ENCODE measurements at regions of chr17 and their contacts with region 1.

Region 1: GRCh38 chr17:36601303-36602029 is at the start of gene MRM1:
- DNase-seq: peak; percentile 89
- H3K4me3 ChIP-seq: peak within 1 kb of the TSS; percentile 73 to 90 (median 84)
- H3K27ac ChIP-seq: peak within 1 kb of the TSS; percentile 69
- H3K4me1 ChIP-seq: peaks cover 13% of the 10 kb centered on the region
- H3K27me3 ChIP-seq: no peaks in the 10 kb centered on the region
- CTCF ChIP-seq: peak in 1 of 2 donors; percentile 23
- total RNA-seq, gene MRM1: 4.3 to 10.1 TPM

Region 2: DNA sequence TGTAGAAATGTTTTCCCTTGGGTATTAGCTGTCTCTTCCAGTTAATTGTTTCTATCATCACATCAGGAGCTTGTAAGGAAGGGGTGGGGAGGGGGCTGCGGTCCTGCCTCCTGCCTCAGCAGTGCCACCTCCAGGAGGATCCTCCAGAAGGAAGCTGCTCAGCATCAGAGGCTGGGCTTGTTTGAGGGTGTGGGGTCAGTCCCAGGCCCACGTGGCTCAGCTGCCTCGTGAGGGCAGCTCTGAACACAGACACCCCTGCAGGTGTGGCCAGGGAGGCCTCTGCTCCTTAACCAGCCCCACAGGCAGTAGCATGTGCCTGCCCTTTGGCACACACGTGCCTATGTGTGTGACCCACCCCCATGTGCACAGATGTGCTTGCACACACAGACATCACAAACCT is 46.2 kb after region 1 on chr17:
- CTCF ChIA-PET with region 1: no interaction called
- dilution Hi-C with region 1: loop called (anchors 5 kb)
- in situ Hi-C with region 1: no loop called
- intact Hi-C with region 1: no loop called
- DNase-seq: no peak
- H3K4me3 ChIP-seq: no peak overlapping the region
- H3K27ac ChIP-seq: no peak overlapping the region
- H3K4me1 ChIP-seq: no peaks in the 10 kb centered on the region
- H3K27me3 ChIP-seq: peaks cover 18% of the 10 kb centered on the region
- CTCF ChIP-seq: peak in 1 of 2 donors; percentile 6

Region 3: GRCh38 chr17:36705874-36706731 is 104.6 kb after region 1 on chr17:
- CTCF ChIA-PET with region 1: interaction called, 7 read pairs
- dilution Hi-C with region 1: no loop called
- in situ Hi-C with region 1: no loop called
- intact Hi-C with region 1: loop called (anchors 1 kb)
- DNase-seq: peak; percentile 14
- H3K4me3 ChIP-seq: no peak overlapping the region
- H3K27ac ChIP-seq: no peak overlapping the region
- H3K4me1 ChIP-seq: no peaks in the 10 kb centered on the region
- H3K27me3 ChIP-seq: peaks cover 3% of the 10 kb centered on the region
- CTCF ChIP-seq: peak; percentile 74 to 76

Region 4: GRCh38 chr17:36948717-36949460 is 347.4 kb after region 1 on chr17 and contains the start of gene AATF:
- CTCF ChIA-PET with region 1: no interaction called
- dilution Hi-C with region 1: no loop called
- in situ Hi-C with region 1: no loop called
- intact Hi-C with region 1: loop called (anchors 5 kb)
- DNase-seq: peak; percentile 95
- H3K4me3 ChIP-seq: peak within 1 kb of the TSS; percentile 78 to 86 (median 78)
- H3K27ac ChIP-seq: peak within 1 kb of the TSS; percentile 74
- H3K4me1 ChIP-seq: peaks cover 18% of the 10 kb centered on the region
- H3K27me3 ChIP-seq: peaks cover 28% of the 10 kb centered on the region
- CTCF ChIP-seq: no peak
- total RNA-seq, gene AATF: 21.2 to 70.3 TPM

Region 5: DNA sequence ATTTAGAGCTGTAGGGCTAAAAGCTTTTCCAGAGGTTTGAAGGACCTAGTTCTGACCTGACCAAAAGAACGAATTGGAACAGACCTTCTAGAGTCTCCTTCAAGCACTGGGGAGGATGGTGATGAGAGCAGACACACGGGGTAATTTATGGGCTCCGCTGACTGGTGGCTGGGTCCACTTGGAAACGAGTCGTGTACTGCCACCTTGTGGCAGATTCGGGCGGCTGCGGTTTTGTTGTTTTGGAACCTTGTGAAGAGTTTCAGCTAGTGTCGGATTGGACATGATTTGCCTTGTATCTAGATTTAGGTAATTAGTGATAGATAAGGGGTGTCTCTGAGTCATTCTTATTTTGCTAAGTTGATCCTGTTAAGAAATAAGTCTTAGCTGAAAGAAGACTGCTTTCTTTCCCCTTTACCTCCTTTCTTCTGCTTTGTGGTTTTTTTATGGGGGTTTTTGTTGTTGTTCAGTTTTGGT is 446.2 kb after region 1 on chr17:
- CTCF ChIA-PET with region 1: interaction called, 4 read pairs
- dilution Hi-C with region 1: no loop called
- in situ Hi-C with region 1: no loop called
- intact Hi-C with region 1: loop called (anchors 2 kb)
- DNase-seq: peak; percentile 57
- H3K4me3 ChIP-seq: no peak overlapping the region
- H3K27ac ChIP-seq: no peak overlapping the region
- H3K4me1 ChIP-seq: no peaks in the 10 kb centered on the region
- H3K27me3 ChIP-seq: no peaks in the 10 kb centered on the region
- CTCF ChIP-seq: peak; percentile 90

Region 6: GRCh38 chr17:37220607-37220953 is 619.1 kb after region 1 on chr17:
- CTCF ChIA-PET with region 1: no interaction called
- dilution Hi-C with region 1: no loop called
- in situ Hi-C with region 1: loop called in 1 of 2 experiments (anchors 25 kb)
- intact Hi-C with region 1: loop called (anchors 5 kb)
- DNase-seq: no peak
- H3K4me3 ChIP-seq: no peak overlapping the region
- H3K27ac ChIP-seq: no peak overlapping the region
- H3K4me1 ChIP-seq: no peaks in the 10 kb centered on the region
- H3K27me3 ChIP-seq: no peaks in the 10 kb centered on the region
- CTCF ChIP-seq: peak; percentile 20 to 64

Measured in mammary epithelial cell (primary cell).